ENCODE measurements at regions of chr2 and their contacts with region 1.

Region 1: GRCh38 chr2:210195101-210195852 is 24.1 kb upstream of the KANSL1L start:
- DNase-seq: no peak
- H3K4me3 ChIP-seq: peak overlapping the region; percentile 14; the same call in 1 of the 2 replicates
- H3K27ac ChIP-seq: no peak overlapping the region
- H3K27me3 ChIP-seq: no peaks in the 10 kb centered on the region
- CTCF ChIP-seq: peak; percentile 64

Region 2: DNA sequence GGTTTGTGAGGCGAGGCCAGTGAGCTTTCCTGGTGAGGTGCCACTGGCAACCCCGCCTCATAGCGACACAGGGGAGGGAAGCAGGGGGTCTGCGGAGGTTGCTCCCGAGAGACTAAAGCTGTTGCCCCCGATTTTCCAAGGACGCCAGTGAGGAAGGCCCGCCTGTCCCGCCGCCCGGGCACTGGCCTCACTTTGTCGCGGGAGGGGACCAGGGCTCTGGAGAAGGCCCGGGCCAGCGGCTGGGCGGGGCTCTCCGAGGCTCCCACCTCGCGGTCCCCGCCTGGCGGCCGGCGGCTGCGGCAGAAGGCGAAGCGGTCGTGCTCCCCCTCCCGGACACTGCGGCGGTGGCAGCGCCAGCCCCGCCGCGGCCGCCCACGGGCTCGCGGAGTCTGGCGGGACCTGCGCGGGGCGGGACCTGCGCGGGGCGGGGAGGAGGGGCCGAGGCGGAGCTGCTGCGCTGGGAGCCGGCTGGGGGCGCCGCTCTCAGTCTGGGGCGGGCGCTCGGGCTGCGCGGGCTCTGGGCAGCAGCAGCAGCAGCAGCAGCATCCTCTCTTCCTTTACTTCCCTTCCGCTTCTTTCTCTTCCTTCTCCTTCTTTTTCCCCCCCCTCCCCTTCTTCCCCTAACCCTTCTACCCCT is 771.6 kb before region 1 on chr2 and contains the start of gene MAP2:
- CTCF ChIA-PET with region 1: interaction called, 11 read pairs
- POLR2A ChIA-PET with region 1: no interaction called
- DNase-seq: peak; percentile 11
- H3K4me3 ChIP-seq: peak within 1 kb of the TSS; percentile 72
- H3K27ac ChIP-seq: no peak within 1 kb of the TSS
- H3K27me3 ChIP-seq: no peaks in the 10 kb centered on the region
- CTCF ChIP-seq: peak; percentile 71
- polyA plus RNA-seq, gene MAP2: 0.69 and 1.1 TPM in 2 replicates

Region 3: DNA sequence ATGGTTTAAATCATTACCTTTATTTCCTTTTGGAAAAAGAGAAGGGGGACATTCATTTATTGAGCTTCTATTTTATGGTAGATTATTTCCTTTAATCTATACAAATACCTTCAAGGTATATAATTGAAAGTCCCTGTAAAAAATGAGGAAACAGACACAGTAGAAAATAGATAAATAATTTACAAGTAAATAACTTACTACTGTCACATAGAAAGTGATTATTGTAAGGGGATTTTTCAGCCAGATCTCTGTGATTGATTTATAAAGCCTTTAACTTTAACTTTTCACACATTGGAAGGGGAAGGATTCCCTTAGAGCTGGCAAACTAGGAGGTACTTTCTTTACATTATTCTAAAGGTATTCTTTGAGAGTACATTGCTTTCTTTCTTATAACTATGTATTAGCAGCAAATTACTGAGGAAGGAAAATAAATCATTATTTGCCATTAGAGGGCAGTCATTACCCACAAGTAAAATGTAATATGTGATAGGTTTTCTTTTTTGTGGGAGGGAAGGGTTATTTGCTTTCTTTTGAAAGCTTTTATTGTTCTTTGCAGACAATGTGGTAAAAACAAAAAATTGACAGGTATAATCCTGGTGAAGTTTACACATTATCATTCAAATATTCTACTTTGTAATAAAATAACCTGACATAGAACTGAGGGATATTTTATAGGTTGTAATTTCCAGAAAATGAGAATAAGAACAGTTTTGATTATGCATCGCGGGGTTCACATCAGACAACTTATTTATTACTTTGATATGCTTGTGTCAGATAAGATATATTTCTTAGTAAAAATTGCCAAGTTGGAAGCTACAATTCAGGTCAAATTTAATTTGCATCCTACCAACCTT is 217.7 kb before region 1 on chr2:
- CTCF ChIA-PET with region 1: interaction called, 121 read pairs
- POLR2A ChIA-PET with region 1: no interaction called
- DNase-seq: peak; percentile 4
- H3K4me3 ChIP-seq: no peak overlapping the region
- H3K27ac ChIP-seq: no peak overlapping the region
- H3K27me3 ChIP-seq: no peaks in the 10 kb centered on the region
- CTCF ChIP-seq: peak; percentile 50

Region 4: DNA sequence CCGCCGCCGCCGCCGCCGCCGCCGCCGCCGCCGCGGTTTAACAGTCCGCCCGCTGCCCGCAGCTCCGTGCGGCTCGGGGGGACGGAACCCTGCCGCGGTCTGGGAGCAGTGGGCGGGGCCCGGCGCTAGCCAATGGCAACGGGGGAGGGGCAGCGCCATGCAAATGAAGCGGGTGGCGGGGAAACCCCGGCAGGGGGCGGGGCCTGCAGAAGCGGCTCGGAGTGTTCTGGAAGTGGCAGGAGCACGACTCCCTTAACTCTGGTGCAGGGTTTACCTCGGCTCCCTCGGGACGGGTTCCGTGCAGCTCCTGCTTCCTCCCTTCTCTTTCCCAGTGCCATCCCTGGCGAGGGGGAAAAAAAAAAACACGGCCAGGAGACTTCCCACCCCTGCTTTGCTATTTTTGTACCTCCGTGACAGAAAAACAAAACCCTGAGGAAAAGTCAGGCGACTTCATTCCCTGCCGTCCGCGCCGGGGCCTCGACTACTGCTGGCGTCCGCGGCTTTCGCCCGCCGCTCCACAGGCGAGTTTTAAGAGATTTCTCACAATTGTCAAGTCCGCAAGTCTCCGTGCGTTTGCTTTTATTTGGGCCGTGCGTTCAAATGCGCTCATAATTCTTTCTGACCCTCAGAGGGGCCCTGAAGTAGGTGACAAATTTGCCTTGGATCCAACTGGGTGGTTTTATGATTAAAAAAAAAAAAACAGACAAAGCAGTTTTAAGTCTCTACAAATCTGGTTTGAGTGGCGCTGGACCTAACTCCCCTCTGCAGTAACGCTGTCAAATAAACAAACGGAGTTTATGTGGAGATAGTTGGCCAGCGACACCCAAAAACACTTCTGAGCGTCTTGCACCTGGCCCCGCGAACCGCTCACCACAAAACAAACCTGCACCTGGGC is 23.7 kb before region 1 on chr2 and contains the start of gene KANSL1L:
- CTCF ChIA-PET with region 1: interaction called, 10 read pairs
- POLR2A ChIA-PET with region 1: no interaction called
- DNase-seq: peak; percentile 93
- H3K4me3 ChIP-seq: peak within 1 kb of the TSS; percentile 86
- H3K27ac ChIP-seq: peak within 1 kb of the TSS; percentile 94
- H3K27me3 ChIP-seq: no peaks in the 10 kb centered on the region
- CTCF ChIP-seq: no peak
- polyA plus RNA-seq, gene KANSL1L: 5.6 and 8.9 TPM in 2 replicates

Region 5: GRCh38 chr2:210224591-210224940 is 29.3 kb after region 1 on chr2:
- CTCF ChIA-PET with region 1: interaction called, 11 read pairs
- POLR2A ChIA-PET with region 1: no interaction called
- DNase-seq: no peak
- H3K4me3 ChIP-seq: peak overlapping the region; percentile 53
- H3K27ac ChIP-seq: no peak overlapping the region
- H3K27me3 ChIP-seq: peaks cover 16% of the 10 kb centered on the region
- CTCF ChIP-seq: no peak